ENCODE measurements at regions of chr4 and their contacts with region 1.

Region 1: DNA sequence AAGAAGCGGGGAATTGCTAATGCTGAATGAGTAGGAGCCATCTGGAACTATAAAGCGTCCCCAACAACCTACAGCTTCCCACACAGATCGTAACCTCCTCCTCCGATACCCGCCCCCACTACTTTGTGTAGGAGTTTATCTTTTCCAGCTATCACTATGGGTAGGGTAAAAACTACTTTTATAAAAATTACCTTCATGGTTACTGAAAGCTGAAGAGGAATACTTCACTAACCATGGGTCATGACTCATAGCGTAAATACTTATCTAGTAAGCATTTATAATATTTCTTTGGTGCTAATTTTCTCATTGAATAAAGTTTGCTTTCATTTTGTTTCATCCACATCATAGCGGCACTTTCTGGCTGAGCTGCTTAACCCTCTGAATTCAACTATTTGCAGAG is 79.4 kb upstream of the TNIP3 start:
- DNase-seq: peak; percentile 46
- H3K4me3 Mint-ChIP-seq: peak overlapping the region; percentile 19
- H3K27ac Mint-ChIP-seq: no peak overlapping the region
- H3K4me1 Mint-ChIP-seq: peaks cover 26% of the 10 kb centered on the region
- H3K27me3 Mint-ChIP-seq: no peaks in the 10 kb centered on the region

Region 2: DNA sequence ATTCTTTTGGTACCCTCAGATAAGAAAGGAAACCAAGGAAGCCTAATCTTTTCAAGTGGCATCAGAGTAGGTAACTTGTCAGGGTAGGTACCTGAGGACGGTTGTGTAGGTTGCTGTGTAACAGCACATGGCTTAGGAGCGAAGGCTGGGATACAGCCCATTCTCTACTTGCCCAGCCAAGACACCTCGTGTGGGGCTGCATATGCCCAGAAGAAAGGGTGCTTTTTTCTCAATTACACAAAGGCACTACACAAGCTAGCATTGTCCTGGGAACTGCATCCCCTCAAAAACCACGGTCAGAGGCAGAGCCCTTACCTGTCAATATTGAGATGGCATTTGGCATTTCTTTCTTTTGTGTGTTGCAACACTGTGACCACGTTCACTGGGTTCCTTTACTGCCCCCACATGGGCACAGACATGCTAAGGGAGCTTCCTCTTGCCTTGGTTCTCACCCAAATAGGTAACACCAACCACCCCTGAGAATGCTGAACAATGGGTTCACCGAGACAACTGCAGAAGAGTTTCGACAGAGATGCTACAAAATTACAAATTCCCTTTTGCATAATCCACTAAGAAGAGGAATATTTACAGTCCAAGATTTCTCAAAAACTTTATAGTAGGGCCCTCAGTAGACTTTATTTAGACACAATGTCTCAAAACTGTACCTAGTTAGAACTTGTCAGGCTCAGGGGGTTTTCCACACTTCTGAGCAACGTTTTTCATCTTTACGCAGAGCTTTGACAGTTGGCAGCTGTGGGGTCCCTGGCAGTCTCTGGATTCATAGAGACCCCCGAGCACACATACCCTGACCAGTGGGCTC is 43.5 kb before region 1 on chr4:
- CTCF ChIA-PET with region 1: interaction called, 6 read pairs
- intact Hi-C with region 1: loop called (anchors 1 kb)
- DNase-seq: peak; percentile 69
- H3K4me3 Mint-ChIP-seq: no peak overlapping the region
- H3K27ac Mint-ChIP-seq: peak overlapping the region; percentile 62
- H3K4me1 Mint-ChIP-seq: peaks cover 24% of the 10 kb centered on the region
- H3K27me3 Mint-ChIP-seq: no peaks in the 10 kb centered on the region

Region 3: DNA sequence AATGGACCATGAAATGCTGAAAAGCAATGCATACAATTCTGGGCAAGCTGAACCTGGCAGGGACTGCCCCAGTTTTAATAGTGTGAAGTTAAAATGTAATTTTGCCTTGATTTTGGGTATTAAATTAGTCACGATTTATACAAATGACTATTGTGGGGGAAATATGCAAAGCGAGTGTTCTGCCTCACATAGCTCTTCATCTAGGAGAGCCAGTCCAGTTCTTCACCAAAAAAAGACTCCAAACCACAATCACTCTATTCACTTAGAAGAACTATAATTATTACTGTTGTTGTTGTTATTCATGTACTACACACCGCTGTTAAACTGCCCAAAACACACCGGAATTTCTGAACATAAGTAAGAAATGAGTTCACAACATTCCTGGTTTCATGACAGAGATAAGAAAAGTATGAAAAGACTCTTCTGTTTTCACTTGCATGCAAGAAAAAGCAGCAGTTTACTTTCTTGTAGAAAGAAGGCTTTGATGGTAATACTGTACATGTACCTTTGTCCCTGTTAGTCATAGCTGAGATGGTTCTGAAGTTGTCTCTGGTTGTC is 35.4 kb after region 1 on chr4:
- CTCF ChIA-PET with region 1: no interaction called
- intact Hi-C with region 1: loop called (anchors 1 kb)
- DNase-seq: peak; percentile 41
- H3K4me3 Mint-ChIP-seq: no peak overlapping the region
- H3K27ac Mint-ChIP-seq: peak overlapping the region; percentile 66
- H3K4me1 Mint-ChIP-seq: peaks cover 19% of the 10 kb centered on the region
- H3K27me3 Mint-ChIP-seq: peaks cover 5% of the 10 kb centered on the region